ENCODE measurements at regions of chr16 and their contacts with region 1.

Region 1: GRCh38 chr16:35795361-35796029 is 2336.1 kb downstream of the TP53TG3F start:
- DNase-seq: no peak
- ATAC-seq: no peak

Region 2: DNA sequence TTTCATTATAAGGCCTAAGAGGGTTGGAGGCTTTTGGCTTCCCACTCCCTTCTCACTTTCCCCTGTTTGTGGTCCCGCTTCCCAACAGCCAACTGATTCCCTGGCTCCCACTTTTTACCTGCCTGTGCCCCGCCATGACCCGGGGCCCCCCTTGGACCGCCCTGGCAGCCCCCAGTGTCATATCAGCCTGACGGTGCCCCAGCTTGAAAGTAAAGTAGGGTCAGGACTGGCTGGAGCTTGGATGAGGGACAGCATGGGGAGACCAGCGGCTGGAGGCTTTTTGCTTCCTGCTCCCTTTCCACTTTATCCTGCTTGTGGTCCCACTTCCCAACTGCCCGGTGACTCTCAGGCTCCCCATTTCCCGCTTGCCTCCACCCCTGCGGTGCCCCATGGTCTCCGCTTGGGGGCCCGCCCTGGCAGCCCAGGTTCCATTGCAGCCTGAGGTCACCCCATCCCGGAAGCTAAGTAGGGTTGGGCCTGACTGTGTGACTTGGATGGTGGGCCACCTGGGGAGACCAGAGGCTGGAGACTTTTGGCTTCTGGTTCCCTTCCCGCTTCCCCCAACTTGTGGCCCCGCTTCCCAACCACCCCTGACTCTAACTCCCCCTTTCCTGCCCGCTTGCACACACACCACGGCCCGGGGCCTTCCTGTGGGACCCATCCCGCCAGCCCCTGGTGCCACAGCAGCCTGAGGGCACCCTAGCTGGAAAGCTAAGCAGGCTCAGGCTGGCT is 61.4 kb before region 1 on chr16:
- intact Hi-C with region 1: loop called (anchors 10 kb)
- DNase-seq: no peak
- ATAC-seq: no peak

Measured in Right ventricle myocardium inferior (tissue), 1 donor.